Posterior cingulate gyrus (tissue), 11 donors: ENCODE measurements at regions of chr2 and their contacts with region 1.

Region 1: GRCh38 chr2:235135990-235136561 is 184.3 kb downstream of the SH3BP4 start:
- DNase-seq: peak; percentile 44 to 96 (median 84)

Region 2: DNA sequence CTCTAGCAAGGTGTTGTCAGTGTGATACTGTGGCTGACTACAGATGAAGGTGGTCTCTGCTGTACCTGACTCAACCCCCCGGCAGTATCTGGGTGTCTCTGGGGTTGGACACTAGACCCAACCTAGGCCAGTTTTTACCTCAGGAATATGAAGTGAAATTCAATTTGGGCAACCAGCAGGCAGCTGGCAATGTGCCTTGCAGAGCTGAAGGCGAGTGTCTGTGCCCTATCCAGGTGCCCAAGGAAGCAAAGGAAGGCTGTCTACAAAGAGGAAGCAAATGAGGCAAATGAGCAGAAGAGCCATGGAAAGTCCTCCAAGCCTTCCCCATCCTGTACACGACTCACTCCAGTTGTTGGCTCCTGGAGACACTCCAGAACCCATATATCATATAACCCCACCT is 93.2 kb after region 1 on chr2:
- intact Hi-C with region 1: loop called (anchors 5 kb)
- DNase-seq: no peak

Region 3: GRCh38 chr2:235378261-235378660 is 242.2 kb after region 1 on chr2:
- intact Hi-C with region 1: loop called (anchors 10 kb)
- DNase-seq: no peak